Calu3 (cell line): ENCODE measurements at regions of chr18 and their contacts with region 1.

Region 1: GRCh38 chr18:22742409-22742808 is 190.7 kb upstream of the RBBP8 start:
- DNase-seq: no peak
- H3K4me3 Mint-ChIP-seq: no peak overlapping the region
- H3K27ac Mint-ChIP-seq: no peak overlapping the region
- H3K4me1 Mint-ChIP-seq: no peaks in the 10 kb centered on the region
- H3K27me3 Mint-ChIP-seq: no peaks in the 10 kb centered on the region
- CTCF ChIP-seq: no peak

Region 2: DNA sequence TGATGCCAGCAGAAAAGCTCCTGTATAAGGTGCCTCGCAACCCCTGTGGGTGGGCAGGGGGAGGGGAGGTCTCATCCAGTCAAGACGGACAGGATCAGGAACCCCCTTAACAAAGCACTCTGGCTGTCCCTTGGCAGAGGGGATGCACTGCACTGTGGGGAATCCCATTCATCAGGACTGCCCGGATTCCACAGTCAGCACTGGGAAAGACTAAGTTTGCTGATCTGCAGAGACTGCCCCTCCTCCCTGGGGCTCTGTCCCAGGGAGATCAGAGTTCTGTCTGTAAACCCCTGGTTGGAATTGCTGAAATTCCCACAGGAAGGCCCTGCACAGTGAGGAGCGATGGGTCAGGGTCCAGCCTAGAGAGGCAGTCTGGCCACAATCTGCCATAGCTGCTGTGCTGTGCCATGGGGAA is 41.3 kb after region 1 on chr18:
- CTCF ChIA-PET with region 1: no interaction called
- intact Hi-C with region 1: loop called (anchors 5 kb)
- DNase-seq: no peak
- H3K4me3 Mint-ChIP-seq: no peak overlapping the region
- H3K27ac Mint-ChIP-seq: no peak overlapping the region
- H3K4me1 Mint-ChIP-seq: no peaks in the 10 kb centered on the region
- H3K27me3 Mint-ChIP-seq: no peaks in the 10 kb centered on the region
- CTCF ChIP-seq: no peak